Caco-2 (cell line): ENCODE measurements at regions of chr17 and their contacts with region 1.

Region 1: DNA sequence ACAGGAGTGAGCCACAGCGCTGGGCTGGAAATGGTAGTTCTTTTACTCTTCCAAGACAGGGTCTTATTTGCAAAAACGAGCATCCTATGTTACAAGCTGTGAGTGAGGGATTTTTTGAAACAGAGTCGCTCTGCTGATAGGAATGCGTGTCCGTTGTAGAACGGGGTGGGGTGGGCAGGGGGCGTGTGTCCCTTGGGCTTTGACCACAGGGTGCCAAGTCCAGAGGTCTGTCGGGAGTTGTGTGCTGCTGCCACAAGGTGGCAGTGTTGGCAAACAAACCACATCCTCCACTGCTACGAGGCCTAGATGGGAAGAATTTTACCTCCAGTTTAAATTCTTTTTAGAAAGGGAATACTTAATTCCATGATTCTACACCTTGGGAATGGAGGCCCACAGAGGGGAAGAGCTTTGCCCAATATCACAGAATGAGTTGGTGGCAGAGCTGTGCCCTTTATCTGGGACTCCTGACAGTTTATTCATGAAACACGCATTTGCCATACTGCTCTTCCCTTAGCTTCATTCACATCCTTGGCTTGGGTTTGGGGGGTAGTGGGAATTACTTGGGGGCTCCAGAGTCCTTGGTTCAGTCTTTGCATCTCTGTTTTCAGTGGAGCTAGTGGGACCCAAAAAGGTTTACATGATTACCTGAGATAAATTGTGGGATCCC is 30.6 kb upstream of the ETV4 start:
- DNase-seq: peak; percentile 86 to 88
- H3K4me3 ChIP-seq: no peak overlapping the region
- H3K4me3 Mint-ChIP-seq: no peak overlapping the region
- H3K27ac Mint-ChIP-seq: peak overlapping the region; percentile 92
- H3K4me1 ChIP-seq: peaks cover 78% of the 10 kb centered on the region
- H3K4me1 Mint-ChIP-seq: peaks cover 66% of the 10 kb centered on the region
- H3K27me3 ChIP-seq: no peaks in the 10 kb centered on the region
- H3K27me3 Mint-ChIP-seq: no peaks in the 10 kb centered on the region
- CTCF ChIP-seq: peak; percentile 95 to 98

Region 2: GRCh38 chr17:43477832-43478634 is 98.7 kb before region 1 on chr17:
- CTCF ChIA-PET with region 1: no interaction called
- POLR2A ChIA-PET with region 1: no interaction called
- intact Hi-C with region 1: no loop called
- DNase-seq: no peak
- H3K4me3 ChIP-seq: no peak overlapping the region
- H3K4me3 Mint-ChIP-seq: no peak overlapping the region
- H3K27ac Mint-ChIP-seq: no peak overlapping the region
- H3K4me1 ChIP-seq: peaks cover 12% of the 10 kb centered on the region
- H3K4me1 Mint-ChIP-seq: peaks cover 6% of the 10 kb centered on the region
- H3K27me3 ChIP-seq: no peaks in the 10 kb centered on the region
- H3K27me3 Mint-ChIP-seq: no peaks in the 10 kb centered on the region
- CTCF ChIP-seq: no peak

Region 3: DNA sequence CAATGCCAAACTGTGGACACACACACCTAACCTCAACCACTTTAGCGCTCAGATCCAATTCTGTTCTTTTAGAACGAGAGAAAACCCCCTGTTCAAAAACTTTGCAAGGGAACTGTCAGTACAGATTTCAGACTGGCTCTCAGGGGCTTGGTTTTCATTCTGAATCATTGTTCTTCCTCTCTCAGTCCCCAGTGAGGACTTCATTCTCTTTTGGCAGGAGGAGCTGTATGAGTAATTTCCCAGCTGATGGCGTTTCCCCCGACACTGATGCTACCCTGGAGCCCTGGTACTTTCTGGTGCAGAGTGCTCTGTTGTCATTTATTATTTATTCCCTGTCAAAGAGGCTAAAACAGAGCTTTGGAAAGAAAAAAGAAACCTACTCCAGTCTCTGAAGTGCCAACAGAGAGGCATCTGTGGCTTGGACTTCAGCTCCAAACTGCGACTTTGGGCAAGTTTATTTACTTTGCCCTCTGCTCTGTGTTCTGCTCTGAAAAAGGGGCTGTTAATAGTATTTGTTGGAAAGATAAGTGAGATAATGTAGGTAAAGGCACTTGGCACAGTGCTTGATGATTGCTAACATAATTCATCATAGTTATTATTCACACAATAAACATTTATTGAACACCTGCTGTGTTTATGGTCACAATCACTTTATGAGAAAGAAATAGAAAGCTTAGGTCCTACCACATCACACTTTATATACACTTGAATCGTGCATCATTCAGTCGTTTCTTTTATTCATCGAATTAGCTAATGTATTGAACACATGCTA is 58.9 kb before region 1 on chr17:
- CTCF ChIA-PET with region 1: interaction called, 13 read pairs
- POLR2A ChIA-PET with region 1: interaction called, 8 read pairs
- intact Hi-C with region 1: loop called (anchors 1 kb)
- DNase-seq: no peak
- H3K4me3 ChIP-seq: no peak overlapping the region
- H3K4me3 Mint-ChIP-seq: no peak overlapping the region
- H3K27ac Mint-ChIP-seq: no peak overlapping the region
- H3K4me1 ChIP-seq: no peaks in the 10 kb centered on the region
- H3K4me1 Mint-ChIP-seq: no peaks in the 10 kb centered on the region
- H3K27me3 ChIP-seq: no peaks in the 10 kb centered on the region
- H3K27me3 Mint-ChIP-seq: no peaks in the 10 kb centered on the region
- CTCF ChIP-seq: no peak

Region 4: GRCh38 chr17:43560461-43561427 is 16.0 kb before region 1 on chr17:
- CTCF ChIA-PET with region 1: interaction called, 6 read pairs
- POLR2A ChIA-PET with region 1: interaction called, 11 read pairs
- intact Hi-C with region 1: no loop called
- DNase-seq: no peak
- H3K4me3 ChIP-seq: no peak overlapping the region
- H3K4me3 Mint-ChIP-seq: no peak overlapping the region
- H3K27ac Mint-ChIP-seq: no peak overlapping the region
- H3K4me1 ChIP-seq: peaks cover 27% of the 10 kb centered on the region
- H3K4me1 Mint-ChIP-seq: peaks cover 40% of the 10 kb centered on the region
- H3K27me3 ChIP-seq: no peaks in the 10 kb centered on the region
- H3K27me3 Mint-ChIP-seq: no peaks in the 10 kb centered on the region
- CTCF ChIP-seq: no peak

Region 5: DNA sequence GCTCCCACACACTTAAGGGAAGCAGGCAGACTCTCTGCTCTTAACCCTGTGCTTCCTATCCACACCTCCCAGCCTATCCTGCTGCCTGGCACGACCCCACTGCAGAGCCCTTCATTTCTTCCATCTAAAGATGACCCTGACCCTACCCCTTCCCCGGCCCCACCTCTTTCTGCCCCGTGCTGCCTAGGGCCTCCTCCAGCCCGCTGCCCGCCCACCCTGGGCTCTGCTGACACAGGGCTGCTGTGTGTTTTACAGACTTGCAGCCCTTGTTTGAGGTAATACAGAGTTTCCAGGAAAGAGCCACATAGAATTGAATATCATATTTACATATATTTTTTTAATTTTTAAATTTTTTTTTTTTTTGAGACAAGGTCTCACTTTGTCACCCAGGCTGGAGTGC is 43.0 kb after region 1 on chr17:
- CTCF ChIA-PET with region 1: no interaction called
- POLR2A ChIA-PET with region 1: no interaction called
- intact Hi-C with region 1: no loop called
- DNase-seq: no peak
- H3K4me3 ChIP-seq: no peak overlapping the region
- H3K4me3 Mint-ChIP-seq: no peak overlapping the region
- H3K27ac Mint-ChIP-seq: peak overlapping the region; percentile 2
- H3K4me1 ChIP-seq: peaks cover 21% of the 10 kb centered on the region
- H3K4me1 Mint-ChIP-seq: peaks cover 28% of the 10 kb centered on the region
- H3K27me3 ChIP-seq: no peaks in the 10 kb centered on the region
- H3K27me3 Mint-ChIP-seq: no peaks in the 10 kb centered on the region
- CTCF ChIP-seq: no peak

Region 6: DNA sequence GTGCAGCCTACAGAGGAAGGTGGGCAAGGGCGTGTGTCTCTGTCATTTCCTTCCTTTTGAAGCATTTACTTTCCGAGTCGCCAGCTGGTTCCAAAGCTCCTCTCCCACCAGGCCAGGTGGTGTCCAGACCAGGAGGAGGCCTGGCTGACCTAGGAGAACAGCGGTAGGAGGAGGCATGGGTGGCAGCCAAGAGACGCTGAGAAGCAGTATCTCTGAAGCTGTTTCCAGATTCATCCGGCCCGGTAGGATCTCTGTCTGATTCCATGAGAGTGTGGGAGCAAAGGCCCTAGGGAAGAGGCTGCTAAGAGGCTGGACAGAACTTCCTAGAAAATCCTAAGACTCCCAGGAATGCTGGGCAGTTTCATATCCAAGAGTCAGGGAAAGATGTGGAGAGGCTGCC is 64.7 kb after region 1 on chr17:
- CTCF ChIA-PET with region 1: no interaction called
- POLR2A ChIA-PET with region 1: no interaction called
- intact Hi-C with region 1: no loop called
- DNase-seq: no peak
- H3K4me3 ChIP-seq: no peak overlapping the region
- H3K4me3 Mint-ChIP-seq: no peak overlapping the region
- H3K27ac Mint-ChIP-seq: peak overlapping the region; percentile 24
- H3K4me1 ChIP-seq: peaks cover 11% of the 10 kb centered on the region
- H3K4me1 Mint-ChIP-seq: peaks cover 16% of the 10 kb centered on the region
- H3K27me3 ChIP-seq: no peaks in the 10 kb centered on the region
- H3K27me3 Mint-ChIP-seq: no peaks in the 10 kb centered on the region
- CTCF ChIP-seq: no peak

Region 7: GRCh38 chr17:43667947-43668348 is 91.3 kb after region 1 on chr17:
- CTCF ChIA-PET with region 1: interaction called, 208 read pairs
- POLR2A ChIA-PET with region 1: interaction called, 46 read pairs
- intact Hi-C with region 1: loop called (anchors 1 kb)
- DNase-seq: peak; percentile 92 to 95
- H3K4me3 ChIP-seq: no peak overlapping the region
- H3K4me3 Mint-ChIP-seq: peak overlapping the region; percentile 40
- H3K27ac Mint-ChIP-seq: peak overlapping the region; percentile 90
- H3K4me1 ChIP-seq: peaks cover 91% of the 10 kb centered on the region
- H3K4me1 Mint-ChIP-seq: peaks cover 41% of the 10 kb centered on the region
- H3K27me3 ChIP-seq: no peaks in the 10 kb centered on the region
- H3K27me3 Mint-ChIP-seq: no peaks in the 10 kb centered on the region
- CTCF ChIP-seq: no peak

Region 8: GRCh38 chr17:43760254-43760852 is 183.7 kb after region 1 on chr17:
- CTCF ChIA-PET with region 1: interaction called, 4 read pairs
- POLR2A ChIA-PET with region 1: no interaction called
- intact Hi-C with region 1: loop called (anchors 1 kb)
- DNase-seq: peak; percentile 96
- H3K4me3 ChIP-seq: no peak overlapping the region
- H3K4me3 Mint-ChIP-seq: peak overlapping the region; percentile 46
- H3K27ac Mint-ChIP-seq: peak overlapping the region; percentile 44
- H3K4me1 ChIP-seq: no peaks in the 10 kb centered on the region
- H3K4me1 Mint-ChIP-seq: peaks cover 9% of the 10 kb centered on the region
- H3K27me3 ChIP-seq: no peaks in the 10 kb centered on the region
- H3K27me3 Mint-ChIP-seq: no peaks in the 10 kb centered on the region
- CTCF ChIP-seq: peak; percentile 99

Region 9: DNA sequence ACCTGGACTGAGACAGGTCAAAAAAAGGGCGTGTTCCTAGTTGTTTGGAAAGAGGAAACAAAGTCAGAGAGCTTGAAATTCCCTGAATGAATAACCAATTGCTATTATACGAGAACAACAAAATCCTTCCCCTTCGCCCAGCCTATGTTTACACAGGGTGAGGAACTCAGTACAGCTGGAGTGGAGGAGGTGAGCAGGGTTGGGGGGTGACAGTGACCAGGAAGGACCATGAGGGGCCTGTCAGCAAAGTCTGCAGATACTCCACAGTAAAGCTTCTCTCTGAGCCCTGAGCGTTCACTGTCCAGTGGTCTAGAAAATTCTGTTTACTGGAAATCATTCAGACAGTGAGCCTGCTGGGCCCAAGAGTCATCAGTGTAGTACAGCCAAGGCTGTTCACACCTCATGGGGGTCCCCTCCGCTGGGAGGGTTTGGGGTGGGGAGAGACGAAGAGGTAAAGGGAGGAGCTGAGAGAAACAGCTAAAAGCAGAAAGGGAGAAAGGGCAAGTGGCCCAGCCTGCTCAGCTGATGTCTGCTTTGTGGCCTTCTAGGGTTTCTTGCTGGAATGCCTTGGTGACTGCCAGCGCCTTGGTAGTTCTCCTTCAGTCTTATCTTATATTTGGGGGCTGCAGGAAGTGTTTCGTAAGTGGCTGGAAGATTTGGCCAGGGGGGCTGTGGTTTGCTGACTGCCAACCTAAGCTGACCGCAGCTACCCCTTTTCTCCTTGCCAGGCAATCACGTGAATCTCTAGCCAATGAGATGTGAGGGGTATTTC is 196.4 kb after region 1 on chr17:
- CTCF ChIA-PET with region 1: no interaction called
- POLR2A ChIA-PET with region 1: no interaction called
- intact Hi-C with region 1: no loop called
- DNase-seq: no peak
- H3K4me3 ChIP-seq: no peak overlapping the region
- H3K4me3 Mint-ChIP-seq: no peak overlapping the region
- H3K27ac Mint-ChIP-seq: peak overlapping the region; percentile 74
- H3K4me1 ChIP-seq: peaks cover 16% of the 10 kb centered on the region
- H3K4me1 Mint-ChIP-seq: peaks cover 23% of the 10 kb centered on the region
- H3K27me3 ChIP-seq: no peaks in the 10 kb centered on the region
- H3K27me3 Mint-ChIP-seq: no peaks in the 10 kb centered on the region
- CTCF ChIP-seq: no peak